ENCODE measurements at regions of chr12 and their contacts with region 1.

Region 1: DNA sequence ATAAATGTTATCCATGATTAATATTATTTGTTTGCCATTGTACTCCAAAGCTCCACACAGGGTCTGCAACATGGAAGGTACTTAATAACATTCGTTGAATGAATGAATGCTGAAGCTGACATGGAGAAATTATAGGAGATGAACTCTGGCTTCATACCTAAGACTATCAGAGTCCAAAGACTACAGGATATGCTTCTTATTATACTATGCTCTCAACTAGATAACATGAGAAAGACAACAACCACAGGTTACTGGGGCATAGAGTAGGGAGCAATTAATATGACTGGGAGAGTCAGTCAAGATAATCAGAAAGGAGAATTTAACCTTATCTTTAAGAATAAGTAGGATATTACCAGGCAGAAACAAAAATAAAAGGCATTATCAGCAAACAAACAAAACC is 236.3 kb upstream of the SOX5 start:
- DNase-seq: no peak
- H3K4me3 ChIP-seq: no peak overlapping the region
- H3K27ac ChIP-seq: no peak overlapping the region
- H3K4me1 ChIP-seq: no peaks in the 10 kb centered on the region
- H3K27me3 ChIP-seq: no peaks in the 10 kb centered on the region
- CTCF ChIP-seq: no peak
- EP300 ChIP-seq: no peak
- POLR2A ChIP-seq: no peak

Region 2: DNA sequence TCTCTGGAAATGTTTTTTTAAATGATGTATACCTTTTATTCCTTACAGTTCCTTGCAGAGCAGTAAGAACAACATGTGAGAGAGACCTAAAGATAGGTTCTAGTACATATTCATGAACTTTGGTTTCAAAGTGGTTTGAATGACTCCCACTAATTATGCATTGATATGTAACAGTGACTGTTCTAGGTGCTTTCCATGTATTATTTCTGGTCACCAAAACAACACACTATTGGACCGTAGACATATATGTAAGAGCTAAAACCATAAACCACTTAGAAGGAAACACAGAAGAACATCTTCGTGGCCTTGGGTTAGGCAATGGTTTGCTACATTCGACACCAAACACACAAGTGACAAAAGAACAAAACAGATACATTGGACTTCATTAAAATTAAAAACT is 274.2 kb before region 1 on chr12:
- intact Hi-C with region 1: loop called in 1 of 4 experiments (anchors 10 kb)
- DNase-seq: no peak
- H3K4me3 ChIP-seq: no peak overlapping the region
- H3K27ac ChIP-seq: no peak overlapping the region
- H3K4me1 ChIP-seq: no peaks in the 10 kb centered on the region
- H3K27me3 ChIP-seq: no peaks in the 10 kb centered on the region
- CTCF ChIP-seq: no peak
- EP300 ChIP-seq: no peak
- POLR2A ChIP-seq: no peak

Measured in ovary (tissue), 10 donors.